Mucosa of descending colon (tissue), 3 donors: ENCODE measurements at regions of chr11 and their contacts with region 1.

Region 1: DNA sequence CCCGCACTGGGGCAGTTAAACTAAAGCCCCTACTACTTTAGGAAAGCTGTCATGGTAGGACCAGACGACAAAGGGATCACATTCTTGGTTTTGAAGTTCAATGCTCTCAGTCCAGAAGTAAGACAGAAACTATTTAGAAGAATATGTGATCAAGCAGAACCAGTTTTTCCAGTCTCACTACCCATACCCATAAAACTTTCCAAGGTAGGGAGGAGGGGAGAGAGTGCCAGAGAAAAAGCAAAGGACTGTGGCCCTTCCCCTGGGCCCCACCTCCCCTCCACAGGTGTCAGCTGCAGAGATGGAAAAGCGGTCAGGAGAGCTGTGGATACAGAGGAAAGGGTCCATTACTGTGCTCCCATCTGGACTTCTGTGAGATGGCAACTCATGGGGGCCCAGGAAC is 587.1 kb downstream of the SOX6 start:
- DNase-seq: peak; percentile 66 to 80 (median 73)
- ATAC-seq: peak; percentile 83
- H3K4me3 ChIP-seq: no peak overlapping the region
- H3K4me1 ChIP-seq: peaks cover 11% of the 10 kb centered on the region
- CTCF ChIP-seq: no peak

Region 2: DNA sequence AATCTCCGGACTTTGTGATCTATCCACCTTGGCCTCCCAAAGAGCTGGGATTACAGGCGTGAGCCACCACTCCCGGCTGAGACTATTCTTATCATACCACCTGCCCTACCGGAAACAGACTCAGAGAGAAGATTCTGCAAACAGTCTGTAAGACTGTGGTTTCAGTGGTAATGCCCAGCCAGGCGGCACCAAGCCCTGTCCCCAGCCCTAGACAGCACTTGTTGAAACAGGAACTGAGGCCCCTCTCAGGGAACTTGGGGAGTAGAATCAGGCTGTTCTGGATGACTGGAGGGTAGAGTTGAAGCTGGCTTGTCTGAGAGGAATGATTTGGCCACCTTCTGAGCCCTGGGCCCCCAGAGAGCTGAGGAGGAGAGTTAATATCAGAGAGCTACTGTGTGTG is 655.8 kb before region 1 on chr11:
- intact Hi-C with region 1: no loop called
- DNase-seq: no peak
- ATAC-seq: peak; percentile 64
- H3K4me3 ChIP-seq: no peak overlapping the region
- H3K4me1 ChIP-seq: no peaks in the 10 kb centered on the region
- CTCF ChIP-seq: no peak

Region 3: DNA sequence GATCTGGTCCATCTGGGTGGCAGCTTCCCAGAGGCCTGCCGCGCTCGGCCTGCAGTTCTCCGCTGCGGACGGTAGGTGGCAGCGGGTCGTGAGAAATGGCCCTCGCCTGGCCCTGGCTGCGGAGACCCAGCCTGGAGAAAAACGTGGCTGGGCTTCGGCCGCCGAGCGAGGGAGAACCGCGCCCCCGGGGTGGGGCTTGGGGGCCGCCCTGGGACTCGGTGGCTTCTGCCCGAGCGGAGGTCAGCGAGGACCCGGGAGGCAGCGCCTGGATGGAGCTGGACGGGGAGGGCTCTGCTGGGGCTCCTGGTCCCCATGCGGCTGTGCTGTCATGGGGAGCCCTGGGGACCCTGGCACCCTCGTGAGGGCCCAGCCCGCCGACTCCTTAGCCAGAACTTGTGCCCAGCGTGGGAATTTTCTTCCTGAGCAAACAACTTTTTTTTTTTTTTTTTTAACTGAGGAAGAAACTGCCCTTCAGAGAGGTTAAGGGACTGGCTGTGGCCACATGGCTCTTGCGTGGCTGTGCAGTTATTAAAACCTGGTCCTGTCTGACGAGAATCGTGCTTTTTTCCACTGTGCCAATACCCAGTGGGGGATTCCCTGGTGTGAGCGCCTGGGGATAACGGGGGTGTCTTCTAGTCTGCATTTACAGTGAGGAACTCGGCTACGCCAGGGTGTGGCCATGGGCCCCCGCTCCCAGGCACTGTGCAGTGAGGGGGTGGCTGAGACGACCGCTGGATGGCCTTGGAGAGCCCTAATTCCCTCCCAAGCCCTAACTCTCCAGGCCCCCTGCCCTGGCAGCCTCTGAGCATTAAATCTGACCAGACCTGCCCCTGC is 118.9 kb before region 1 on chr11:
- intact Hi-C with region 1: no loop called
- DNase-seq: peak; percentile 89 to 97 (median 94)
- ATAC-seq: peak; percentile 98
- H3K4me3 ChIP-seq: no peak overlapping the region
- H3K4me1 ChIP-seq: peaks cover 14% of the 10 kb centered on the region
- CTCF ChIP-seq: peak; percentile 98

Region 4: GRCh38 chr11:15819679-15820286 is 50.6 kb after region 1 on chr11:
- intact Hi-C with region 1: loop called in 1 of 2 experiments (anchors 10 kb)
- DNase-seq: peak; percentile 80 to 91 (median 81)
- ATAC-seq: peak; percentile 81
- H3K4me3 ChIP-seq: no peak overlapping the region
- H3K4me1 ChIP-seq: peaks cover 27% of the 10 kb centered on the region
- CTCF ChIP-seq: peak; percentile 86